GM10248 (cell line): ENCODE measurements at regions of chr3 and their contacts with region 1.

Region 1: DNA sequence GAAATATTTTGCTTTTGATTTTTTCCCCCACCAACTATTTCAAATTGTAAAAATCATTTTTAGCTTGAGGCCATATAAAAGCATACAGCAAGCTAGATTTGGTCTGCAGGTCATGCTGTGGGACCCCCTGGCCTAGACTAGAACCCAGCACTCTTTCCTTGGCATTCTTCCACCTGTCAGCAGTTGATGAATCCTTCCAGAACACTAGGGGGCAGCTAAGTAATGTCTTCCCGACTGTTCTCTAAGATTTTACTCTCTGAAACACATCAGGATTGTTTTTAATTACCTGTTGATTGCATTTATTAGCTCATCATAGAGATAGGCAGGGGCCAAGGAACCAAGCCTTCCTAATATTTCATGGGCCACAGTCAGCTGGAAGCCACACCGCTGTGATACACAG is 174.5 kb downstream of the CACNA1D start:
- DNase-seq: no peak
- CTCF ChIP-seq: peak; percentile 34

Region 2: DNA sequence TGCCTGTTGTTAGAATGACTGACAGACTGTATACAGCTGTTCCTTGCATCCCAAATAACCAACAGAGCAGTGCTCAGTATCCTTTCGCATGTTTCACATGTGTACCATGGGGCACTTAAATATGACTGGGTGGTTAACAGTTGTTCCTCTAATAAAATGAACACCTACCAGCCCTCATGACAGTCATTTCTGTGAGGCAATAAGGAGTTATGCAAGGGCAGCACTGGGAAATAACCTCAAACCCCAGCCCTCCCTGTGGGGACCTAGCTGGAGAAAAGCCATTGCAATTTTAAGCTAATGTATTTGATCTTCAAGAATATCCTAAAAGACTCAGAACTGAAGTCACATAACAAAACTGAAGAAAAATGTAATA is 546.0 kb before region 1 on chr3:
- CTCF ChIA-PET with region 1: no interaction called
- POLR2A ChIA-PET with region 1: no interaction called
- DNase-seq: no peak
- CTCF ChIP-seq: no peak

Region 3: GRCh38 chr3:53680028-53680427 is 11.2 kb after region 1 on chr3:
- CTCF ChIA-PET with region 1: interaction called, 13 read pairs
- POLR2A ChIA-PET with region 1: no interaction called
- DNase-seq: no peak
- CTCF ChIP-seq: no peak